Activated naive CD4-positive, alpha-beta T cell treated with anti-CD3 and anti-CD28 coated beads for 36 hours (primary cell): ENCODE measurements at regions of chr4 and their contacts with region 1.

Region 1: GRCh38 chr4:98510757-98511517 is 147.5 kb downstream of the TSPAN5 start:
- DNase-seq: peak; percentile 73
- H3K4me3 Mint-ChIP-seq: peak overlapping the region; percentile 10
- H3K27ac Mint-ChIP-seq: peak overlapping the region; percentile 57
- H3K4me1 Mint-ChIP-seq: peaks cover 53% of the 10 kb centered on the region
- H3K27me3 Mint-ChIP-seq: no peaks in the 10 kb centered on the region

Region 2: GRCh38 chr4:98446499-98447375 is 64.2 kb before region 1 on chr4:
- CTCF ChIA-PET with region 1: no interaction called
- intact Hi-C with region 1: loop called (anchors 2 kb)
- DNase-seq: peak; percentile 72
- H3K4me3 Mint-ChIP-seq: peak overlapping the region; percentile 48
- H3K27ac Mint-ChIP-seq: peak overlapping the region; percentile 76
- H3K4me1 Mint-ChIP-seq: peaks cover 31% of the 10 kb centered on the region
- H3K27me3 Mint-ChIP-seq: no peaks in the 10 kb centered on the region

Region 3: DNA sequence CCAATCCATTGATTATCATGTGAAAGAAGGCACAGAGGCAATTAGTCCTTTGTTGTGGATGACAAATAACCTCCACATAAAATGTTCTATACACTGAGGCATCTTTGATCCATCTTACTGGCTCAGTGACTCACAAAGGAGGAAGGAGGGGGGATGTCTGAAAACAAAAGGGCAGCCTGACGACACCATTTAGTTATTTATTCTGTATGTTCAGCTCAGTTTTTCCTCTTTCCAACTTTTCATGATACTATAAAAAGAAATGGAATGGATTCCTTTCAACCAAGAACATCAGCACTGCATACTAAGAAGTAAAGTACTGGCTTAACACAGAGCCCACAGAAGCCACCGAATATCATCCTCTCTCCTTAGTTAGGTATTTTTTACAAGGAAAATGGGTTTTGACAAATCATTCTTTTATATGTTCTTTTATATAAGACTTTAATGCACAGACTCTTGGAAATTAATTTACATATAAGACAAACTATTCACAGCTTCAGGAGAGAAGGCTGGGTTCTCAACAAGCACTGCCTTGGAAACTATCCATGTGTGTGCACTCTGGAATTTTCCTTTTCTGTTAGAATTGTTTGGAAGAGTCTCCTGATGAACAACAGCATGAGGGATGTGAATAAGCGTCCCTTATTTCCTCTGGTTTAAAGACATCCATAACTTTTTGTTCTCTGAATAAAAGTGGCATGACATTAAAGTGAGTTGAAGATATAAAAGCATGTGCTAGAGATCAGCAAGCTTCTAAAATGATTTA is 11.9 kb after region 1 on chr4:
- CTCF ChIA-PET with region 1: no interaction called
- intact Hi-C with region 1: loop called (anchors 1 kb)
- DNase-seq: peak; percentile 35
- H3K4me3 Mint-ChIP-seq: no peak overlapping the region
- H3K27ac Mint-ChIP-seq: peak overlapping the region; percentile 14
- H3K4me1 Mint-ChIP-seq: peaks cover 49% of the 10 kb centered on the region
- H3K27me3 Mint-ChIP-seq: no peaks in the 10 kb centered on the region

Region 4: DNA sequence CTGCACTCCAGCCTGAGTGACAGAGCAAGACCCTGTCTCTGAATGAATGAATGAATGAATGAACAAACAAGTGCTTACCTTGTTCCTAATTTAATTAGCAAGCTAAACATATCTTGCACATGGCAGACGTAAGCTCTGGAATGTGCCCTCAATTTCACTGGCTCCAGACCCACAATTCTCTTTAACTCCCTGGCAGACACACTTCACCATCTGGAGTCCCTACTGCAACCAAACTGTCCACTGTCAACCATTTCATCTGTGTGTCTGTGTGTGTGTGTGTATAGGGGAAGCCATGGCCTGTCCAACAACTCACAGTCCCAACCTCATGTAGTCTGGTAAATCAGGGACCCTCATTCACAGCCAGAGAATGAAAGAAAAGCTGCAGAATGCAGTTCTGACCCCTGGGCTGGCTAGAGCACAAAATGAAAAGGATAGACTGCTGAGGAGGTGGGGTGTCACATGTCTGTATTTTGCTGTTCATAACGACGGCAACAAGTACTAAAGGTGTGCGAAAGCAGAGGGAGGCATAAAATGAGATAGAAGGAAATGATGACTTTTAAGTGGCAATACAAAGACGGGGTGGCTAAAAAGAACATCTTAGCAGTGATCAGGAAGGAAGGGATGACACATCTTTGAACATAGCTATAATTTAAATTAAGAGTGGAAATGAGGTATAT is 33.3 kb after region 1 on chr4:
- CTCF ChIA-PET with region 1: no interaction called
- intact Hi-C with region 1: loop called (anchors 1 kb)
- DNase-seq: peak; percentile 15
- H3K4me3 Mint-ChIP-seq: no peak overlapping the region
- H3K27ac Mint-ChIP-seq: peak overlapping the region; percentile 15
- H3K4me1 Mint-ChIP-seq: peaks cover 19% of the 10 kb centered on the region
- H3K27me3 Mint-ChIP-seq: no peaks in the 10 kb centered on the region

Region 5: GRCh38 chr4:98566361-98567008 is 55.5 kb after region 1 on chr4:
- CTCF ChIA-PET with region 1: no interaction called
- intact Hi-C with region 1: no loop called
- DNase-seq: no peak
- H3K4me3 Mint-ChIP-seq: no peak overlapping the region
- H3K27ac Mint-ChIP-seq: no peak overlapping the region
- H3K4me1 Mint-ChIP-seq: peaks cover 35% of the 10 kb centered on the region
- H3K27me3 Mint-ChIP-seq: no peaks in the 10 kb centered on the region

Region 6: DNA sequence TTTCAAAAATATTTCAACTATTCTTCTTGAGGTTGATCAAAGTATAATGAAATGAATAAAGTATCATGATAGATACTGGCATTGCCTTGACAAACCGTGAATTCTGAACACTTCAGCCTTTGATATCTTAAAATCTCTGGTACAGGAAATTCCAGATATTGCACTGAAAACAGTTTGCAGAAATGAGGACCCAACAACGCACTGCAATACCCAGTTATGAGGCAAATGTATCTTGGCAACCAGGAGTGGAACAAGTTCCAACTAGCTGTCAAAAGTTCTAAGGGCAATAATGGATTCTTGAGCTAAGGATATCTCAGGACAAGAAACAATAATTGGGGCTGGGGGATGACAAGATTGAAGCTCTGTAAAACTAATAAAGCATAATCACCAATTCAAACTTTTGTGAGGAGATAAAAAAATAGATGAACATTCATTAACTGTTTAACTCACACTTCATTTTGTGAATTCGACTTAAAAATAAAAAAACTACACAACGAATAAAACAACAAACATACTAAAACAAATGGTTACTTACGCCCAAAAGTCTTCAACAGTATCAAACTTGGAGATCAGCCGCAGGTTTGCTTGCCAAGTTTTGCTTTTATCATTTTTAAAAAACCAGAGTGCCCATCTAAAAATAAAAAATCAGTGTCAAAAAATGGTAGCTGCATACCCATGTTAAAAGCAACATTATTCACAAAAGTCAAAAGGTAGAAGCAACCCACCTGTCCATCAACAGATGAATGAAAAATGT is 379.9 kb after region 1 on chr4:
- CTCF ChIA-PET with region 1: no interaction called
- intact Hi-C with region 1: no loop called
- DNase-seq: no peak
- H3K4me3 Mint-ChIP-seq: no peak overlapping the region
- H3K27ac Mint-ChIP-seq: no peak overlapping the region
- H3K4me1 Mint-ChIP-seq: peaks cover 10% of the 10 kb centered on the region
- H3K27me3 Mint-ChIP-seq: no peaks in the 10 kb centered on the region